MCF 10A (cell line): ENCODE measurements at regions of chr19 and their contacts with region 1.

Region 1: GRCh38 chr19:17441241-17442021 is 7.0 kb downstream of the TMEM221 start:
- DNase-seq: peak; percentile 23
- H3K4me3 Mint-ChIP-seq: no peak overlapping the region
- H3K27ac Mint-ChIP-seq: no peak overlapping the region
- H3K4me1 Mint-ChIP-seq: no peaks in the 10 kb centered on the region
- H3K27me3 Mint-ChIP-seq: no peaks in the 10 kb centered on the region
- CTCF ChIP-seq: peak; percentile 37

Region 2: DNA sequence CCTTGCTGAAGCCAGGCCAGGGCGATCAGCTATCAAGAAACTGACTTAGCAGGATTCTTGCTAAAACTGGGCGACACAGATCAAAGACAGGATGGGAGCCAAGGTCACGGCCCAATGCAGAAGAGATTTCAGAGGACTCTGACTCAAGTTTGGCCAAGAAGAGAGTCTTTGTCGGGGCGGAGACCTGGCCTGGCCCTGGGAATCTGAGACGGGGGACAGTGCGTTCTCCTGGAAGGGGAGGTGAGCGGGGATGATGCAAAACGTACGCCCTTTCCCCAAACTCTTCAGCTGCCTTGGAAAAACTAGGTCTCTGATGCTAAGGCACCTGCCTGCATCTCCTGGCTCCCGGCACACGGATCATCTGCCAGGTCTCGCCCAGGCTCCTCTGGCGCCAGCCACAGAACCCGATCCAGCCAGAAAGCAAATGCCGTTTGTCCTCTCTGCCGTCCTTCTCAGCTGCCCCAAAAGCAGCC is 11.8 kb before region 1 on chr19:
- CTCF ChIA-PET with region 1: interaction called, 11 read pairs
- POLR2A ChIA-PET with region 1: no interaction called
- intact Hi-C with region 1: no loop called
- DNase-seq: no peak
- H3K4me3 Mint-ChIP-seq: no peak overlapping the region
- H3K27ac Mint-ChIP-seq: no peak overlapping the region
- H3K4me1 Mint-ChIP-seq: peaks cover 10% of the 10 kb centered on the region
- H3K27me3 Mint-ChIP-seq: no peaks in the 10 kb centered on the region
- CTCF ChIP-seq: no peak